Dendritic cell treated with granulocyte-macrophage colony-stimulating factor and Interleukin-4, amounts not matched to agents 40 ng/mL and 50 ng/mL, for 4 days (primary cell): ENCODE measurements at regions of chr18 and their contacts with region 1.

Region 1: GRCh38 chr18:49476664-49477411 is 10.2 kb downstream of the C18orf32 start:
- H3K4me3 Mint-ChIP-seq: peak overlapping the region; percentile 82
- H3K27ac Mint-ChIP-seq: peak overlapping the region; percentile 98
- H3K4me1 Mint-ChIP-seq: peaks cover 27% of the 10 kb centered on the region
- H3K27me3 Mint-ChIP-seq: peaks cover 2% of the 10 kb centered on the region

Region 2: GRCh38 chr18:49300538-49300937 is 176.3 kb before region 1 on chr18:
- intact Hi-C with region 1: no loop called
- H3K4me3 Mint-ChIP-seq: no peak overlapping the region
- H3K27ac Mint-ChIP-seq: no peak overlapping the region
- H3K4me1 Mint-ChIP-seq: no peaks in the 10 kb centered on the region
- H3K27me3 Mint-ChIP-seq: no peaks in the 10 kb centered on the region

Region 3: GRCh38 chr18:49359732-49360444 is 117.0 kb before region 1 on chr18:
- intact Hi-C with region 1: loop called (anchors 10 kb)
- H3K4me3 Mint-ChIP-seq: no peak overlapping the region
- H3K27ac Mint-ChIP-seq: peak overlapping the region; percentile 79
- H3K4me1 Mint-ChIP-seq: peaks cover 30% of the 10 kb centered on the region
- H3K27me3 Mint-ChIP-seq: no peaks in the 10 kb centered on the region